ENCODE measurements at regions of chr11 and their contacts with region 1.

Region 1: GRCh38 chr11:133732109-133732674 is 113.1 kb downstream of the SPATA19 start:
- DNase-seq: no peak

Region 2: GRCh38 chr11:133797554-133797953 is 65.4 kb after region 1 on chr11:
- intact Hi-C with region 1: loop called in 1 of 2 experiments (anchors 10 kb)
- DNase-seq: no peak

Measured in posterior vena cava (tissue), 2 donors.